Panc1 (cell line): ENCODE measurements at regions of chr15 and their contacts with region 1.

Region 1: GRCh38 chr15:86062646-86063243 is 16.9 kb upstream of the AGBL1 start:
- DNase-seq: no peak
- ATAC-seq: no peak
- H3K4me3 ChIP-seq: no peak overlapping the region
- H3K27ac ChIP-seq: no peak overlapping the region
- H3K4me1 ChIP-seq: no peaks in the 10 kb centered on the region
- H3K27me3 ChIP-seq: peaks cover 14% of the 10 kb centered on the region; the same call in 1 of the 2 replicates
- CTCF ChIP-seq: no peak

Region 2: DNA sequence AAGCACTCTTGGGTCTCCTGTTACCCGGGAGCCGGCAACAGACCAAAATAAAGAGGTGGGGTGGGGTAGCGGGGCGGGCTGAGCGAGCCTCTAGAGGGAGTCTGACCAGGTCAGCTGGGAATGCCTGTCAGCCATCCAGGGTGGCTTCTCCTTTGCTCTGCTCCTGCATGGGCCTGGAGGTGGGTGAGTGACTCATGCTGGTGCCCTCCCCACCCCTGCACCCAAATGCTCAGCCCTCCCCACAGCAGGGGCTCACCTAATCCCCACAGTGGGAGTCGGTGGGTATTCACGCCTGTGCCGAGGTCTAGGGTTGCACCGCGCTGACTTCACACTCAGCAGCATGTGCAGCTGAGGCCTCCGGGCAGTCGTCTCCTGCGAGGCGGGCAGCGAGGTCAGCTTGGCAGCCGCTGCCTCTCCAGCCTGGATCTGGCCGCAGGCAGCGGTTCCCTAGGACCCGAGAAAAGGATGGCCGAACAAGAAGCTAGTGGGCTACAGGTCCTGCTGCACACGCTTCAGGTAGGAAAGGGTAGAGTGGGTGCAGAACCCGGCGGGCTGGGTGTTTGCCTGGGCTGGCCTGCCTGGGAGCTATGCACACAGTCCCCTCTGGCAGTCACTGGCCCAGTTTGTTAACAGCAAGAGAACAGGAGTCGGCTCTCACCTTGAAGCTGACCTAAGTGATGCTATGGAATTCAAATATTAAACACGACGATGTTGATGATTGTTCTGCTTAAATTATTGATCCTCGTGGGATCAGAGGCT is 16.9 kb after region 1 on chr15 and contains the start of gene AGBL1:
- CTCF ChIA-PET with region 1: interaction called, 15 read pairs
- POLR2A ChIA-PET with region 1: no interaction called
- in situ Hi-C with region 1: no loop called
- intact Hi-C with region 1: no loop called
- DNase-seq: no peak
- ATAC-seq: peak; percentile 62; the same call in 1 of the 2 replicates
- H3K4me3 ChIP-seq: no peak within 1 kb of the TSS
- H3K27ac ChIP-seq: no peak within 1 kb of the TSS
- H3K4me1 ChIP-seq: no peaks in the 10 kb centered on the region
- H3K27me3 ChIP-seq: peaks cover 7% of the 10 kb centered on the region; the same call in 1 of the 2 replicates
- CTCF ChIP-seq: no peak
- total RNA-seq, gene AGBL1: not detected